Left lung (tissue), 14 donors: ENCODE measurements at regions of chr7 and their contacts with region 1.

Region 1: GRCh38 chr7:17301471-17302456 is 3.3 kb downstream of the AHR start:
- DNase-seq: peak in 1 of 4 donors; percentile 51
- ATAC-seq: no peak
- H3K4me3 ChIP-seq: peak overlapping the region; percentile 80 to 86
- H3K27ac ChIP-seq: peak overlapping the region; percentile 97 to 98
- H3K4me1 ChIP-seq: peaks cover 30 to 59% of the 10 kb centered on the region in 2 donors
- H3K27me3 ChIP-seq: no peaks in the 10 kb centered on the region
- CTCF ChIP-seq: peak; percentile 39 to 64

Region 2: DNA sequence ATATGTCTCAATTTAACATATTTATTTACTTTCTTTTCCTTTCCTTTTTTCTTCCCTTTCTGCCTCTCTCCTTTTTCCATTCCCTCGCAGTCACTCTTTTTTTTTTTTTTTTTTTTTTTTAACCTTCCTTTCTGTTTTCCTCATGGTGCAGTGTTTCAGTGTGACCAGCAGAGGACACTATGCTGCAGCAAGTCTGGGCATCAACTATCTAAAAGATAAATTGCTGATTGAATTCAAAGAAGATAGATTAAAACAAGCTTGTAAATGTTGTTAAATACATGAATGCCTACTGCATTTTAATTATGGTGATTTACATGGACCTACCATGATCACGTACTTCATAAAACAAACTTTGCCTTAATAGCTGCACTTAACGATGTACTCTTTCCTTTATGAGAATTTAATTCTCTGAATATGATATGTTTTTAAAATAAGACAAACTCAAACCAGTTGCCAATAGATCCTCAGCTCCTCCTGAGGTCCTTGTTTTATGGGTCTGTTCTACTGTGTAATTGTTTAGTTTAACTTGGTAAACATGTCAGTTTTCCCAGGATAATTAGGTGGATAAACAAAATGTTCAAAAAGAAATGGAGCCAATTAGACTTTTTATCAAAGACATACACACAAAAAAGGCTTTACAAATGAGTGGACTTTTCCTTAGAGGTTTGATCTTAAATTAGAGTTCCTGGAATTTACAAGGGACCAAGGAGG is 319.0 kb before region 1 on chr7:
- intact Hi-C with region 1: loop called in 1 of 2 experiments (anchors 10 kb)
- DNase-seq: peak in 2 of 4 donors; percentile 55 to 58
- ATAC-seq: peak; percentile 81
- H3K4me3 ChIP-seq: no peak overlapping the region
- H3K27ac ChIP-seq: peak overlapping the region; percentile 10 to 29
- H3K4me1 ChIP-seq: peaks cover 12 to 43% of the 10 kb centered on the region in 2 donors
- H3K27me3 ChIP-seq: no peaks in the 10 kb centered on the region
- CTCF ChIP-seq: peak; percentile 80 to 91